Ovary (tissue), 10 donors: ENCODE measurements at regions of chr17 and their contacts with region 1.

Region 1: GRCh38 chr17:44308320-44308818 is at the start of gene RUNDC3A:
- DNase-seq: peak; percentile 88 to 97 (median 94)
- H3K4me3 ChIP-seq: peak within 1 kb of the TSS; percentile 23
- H3K27ac ChIP-seq: peak within 1 kb of the TSS; percentile 39 to 51
- H3K4me1 ChIP-seq: peaks cover 6% of the 10 kb centered on the region
- H3K27me3 ChIP-seq: no peaks in the 10 kb centered on the region
- CTCF ChIP-seq: no peak
- EP300 ChIP-seq: no peak
- POLR2A ChIP-seq: no peak
- total RNA-seq, gene RUNDC3A: 0.24 to 5.4 (median 0.69) TPM

Region 2: GRCh38 chr17:44218344-44219107 is 89.8 kb before region 1 on chr17:
- intact Hi-C with region 1: loop called in 1 of 4 experiments (anchors 5 kb)
- DNase-seq: peak; percentile 87 to 93 (median 91)
- H3K4me3 ChIP-seq: peak overlapping the region; percentile 94
- H3K27ac ChIP-seq: peak overlapping the region; percentile 98 to 99
- H3K4me1 ChIP-seq: peaks cover 16% of the 10 kb centered on the region
- H3K27me3 ChIP-seq: no peaks in the 10 kb centered on the region
- CTCF ChIP-seq: peak; percentile 19 to 90 (median 30)
- EP300 ChIP-seq: no peak
- POLR2A ChIP-seq: peak; percentile 45

Region 3: GRCh38 chr17:44417553-44417952 is 109.2 kb after region 1 on chr17:
- intact Hi-C with region 1: no loop called
- DNase-seq: no peak
- H3K4me3 ChIP-seq: no peak overlapping the region
- H3K27ac ChIP-seq: no peak overlapping the region
- H3K4me1 ChIP-seq: no peaks in the 10 kb centered on the region
- H3K27me3 ChIP-seq: no peaks in the 10 kb centered on the region
- CTCF ChIP-seq: no peak
- EP300 ChIP-seq: no peak
- POLR2A ChIP-seq: no peak